HCT116 (cell line): ENCODE measurements at regions of chrX and their contacts with region 1.

Region 1: GRCh38 chrX:43958529-43958928 is 14.7 kb downstream of the NDP start:
- DNase-seq: peak; percentile 81
- ATAC-seq: peak; percentile 95
- H3K4me3 ChIP-seq: 0 out of 4 replicates have a peak overlapping the region, but pooled peaks of 1 of the 2 experiments have one; percentile 8
- H3K27ac ChIP-seq: no peak overlapping the region
- H3K4me1 ChIP-seq: peaks cover 0 to 5% of the 10 kb centered on the region in 2 experiments; a peak in 1 of 4 replicates
- H3K27me3 ChIP-seq: no peaks in the 10 kb centered on the region
- CTCF ChIP-seq: peak; percentile 54 to 96 (median 71); a peak in 5 of 6 replicates
- POLR2A ChIP-seq: no peak
- RAD21 ChIP-seq: peak; percentile 91

Region 2: GRCh38 chrX:43813898-43814297 is 144.6 kb before region 1 on chrX:
- CTCF ChIA-PET with region 1: interaction called, 10 read pairs
- POLR2A ChIA-PET with region 1: no interaction called
- RAD21 ChIA-PET with region 1: no interaction called
- intact Hi-C with region 1: no loop called
- DNase-seq: peak; percentile 10
- ATAC-seq: peak; percentile 67; the same call in 1 of the 2 replicates
- H3K4me3 ChIP-seq: no peak overlapping the region
- H3K27ac ChIP-seq: no peak overlapping the region
- H3K4me1 ChIP-seq: no peaks in the 10 kb centered on the region
- H3K27me3 ChIP-seq: no peaks in the 10 kb centered on the region
- CTCF ChIP-seq: peak; percentile 13 to 34 (median 32); a peak in 3 of 6 replicates
- POLR2A ChIP-seq: no peak
- RAD21 ChIP-seq: peak; percentile 50

Region 3: GRCh38 chrX:44025555-44025954 is 67.0 kb after region 1 on chrX:
- CTCF ChIA-PET with region 1: interaction called, 13 read pairs
- POLR2A ChIA-PET with region 1: no interaction called
- RAD21 ChIA-PET with region 1: no interaction called
- intact Hi-C with region 1: loop called (anchors 2 kb)
- DNase-seq: no peak
- ATAC-seq: no peak
- H3K4me3 ChIP-seq: no peak overlapping the region
- H3K27ac ChIP-seq: no peak overlapping the region
- H3K4me1 ChIP-seq: peaks cover 0 to 5% of the 10 kb centered on the region in 2 experiments; a peak in 1 of 4 replicates
- H3K27me3 ChIP-seq: no peaks in the 10 kb centered on the region
- CTCF ChIP-seq: no peak
- POLR2A ChIP-seq: no peak
- RAD21 ChIP-seq: no peak

Region 4: GRCh38 chrX:44244008-44244407 is 285.5 kb after region 1 on chrX:
- CTCF ChIA-PET with region 1: interaction called, 47 read pairs
- POLR2A ChIA-PET with region 1: no interaction called
- RAD21 ChIA-PET with region 1: interaction called, 10 to 12 read pairs
- intact Hi-C with region 1: loop called (anchors 1 kb)
- DNase-seq: peak; percentile 12
- ATAC-seq: no peak
- H3K4me3 ChIP-seq: no peak overlapping the region
- H3K27ac ChIP-seq: no peak overlapping the region
- H3K4me1 ChIP-seq: no peaks in the 10 kb centered on the region
- H3K27me3 ChIP-seq: no peaks in the 10 kb centered on the region
- CTCF ChIP-seq: peak; percentile 40 to 53 (median 52); a peak in 4 of 6 replicates
- POLR2A ChIP-seq: no peak
- RAD21 ChIP-seq: peak; percentile 72

Region 5: GRCh38 chrX:44542567-44543325 is 584.2 kb after region 1 on chrX and contains the start of gene FUNDC1:
- CTCF ChIA-PET with region 1: no interaction called
- POLR2A ChIA-PET with region 1: no interaction called
- RAD21 ChIA-PET with region 1: no interaction called
- intact Hi-C with region 1: loop called (anchors 10 kb)
- DNase-seq: peak; percentile 83
- ATAC-seq: peak; percentile 96
- H3K4me3 ChIP-seq: peak within 1 kb of the TSS; percentile 65 to 75
- H3K27ac ChIP-seq: peak within 1 kb of the TSS; percentile 23; the same call in 1 of the 2 replicates
- H3K4me1 ChIP-seq: peaks cover 0 to 9% of the 10 kb centered on the region in 2 experiments; a peak in 1 of 4 replicates
- H3K27me3 ChIP-seq: no peaks in the 10 kb centered on the region
- CTCF ChIP-seq: peak in 2 of 3 experiments; percentile 29 to 30; a peak in 2 of 6 replicates
- POLR2A ChIP-seq: no peak
- RAD21 ChIP-seq: peak; percentile 38
- total RNA-seq, gene FUNDC1: 17.0 TPM